ENCODE measurements at regions of chr11 and their contacts with region 1.

Region 1: GRCh38 chr11:66677599-66678375 is at the start of gene RBM4B:
- DNase-seq: peak; percentile 92 to 98
- H3K4me3 ChIP-seq: peak within 1 kb of the TSS; percentile 69 to 86 (median 78)
- H3K27ac ChIP-seq: peak within 1 kb of the TSS; percentile 88
- H3K4me1 ChIP-seq: peaks cover 3 to 15% (median 8%) of the 10 kb centered on the region in 4 experiments; a peak in 5 of 7 replicates
- H3K27me3 ChIP-seq: no peaks in the 10 kb centered on the region
- CTCF ChIP-seq: no peak
- EP300 ChIP-seq: no peak
- POLR2A ChIP-seq: peak; percentile 77 to 88
- RAD21 ChIP-seq: no peak
- total RNA-seq, gene RBM4B: 27.5 and 30.6 TPM in 2 replicates

Region 2: DNA sequence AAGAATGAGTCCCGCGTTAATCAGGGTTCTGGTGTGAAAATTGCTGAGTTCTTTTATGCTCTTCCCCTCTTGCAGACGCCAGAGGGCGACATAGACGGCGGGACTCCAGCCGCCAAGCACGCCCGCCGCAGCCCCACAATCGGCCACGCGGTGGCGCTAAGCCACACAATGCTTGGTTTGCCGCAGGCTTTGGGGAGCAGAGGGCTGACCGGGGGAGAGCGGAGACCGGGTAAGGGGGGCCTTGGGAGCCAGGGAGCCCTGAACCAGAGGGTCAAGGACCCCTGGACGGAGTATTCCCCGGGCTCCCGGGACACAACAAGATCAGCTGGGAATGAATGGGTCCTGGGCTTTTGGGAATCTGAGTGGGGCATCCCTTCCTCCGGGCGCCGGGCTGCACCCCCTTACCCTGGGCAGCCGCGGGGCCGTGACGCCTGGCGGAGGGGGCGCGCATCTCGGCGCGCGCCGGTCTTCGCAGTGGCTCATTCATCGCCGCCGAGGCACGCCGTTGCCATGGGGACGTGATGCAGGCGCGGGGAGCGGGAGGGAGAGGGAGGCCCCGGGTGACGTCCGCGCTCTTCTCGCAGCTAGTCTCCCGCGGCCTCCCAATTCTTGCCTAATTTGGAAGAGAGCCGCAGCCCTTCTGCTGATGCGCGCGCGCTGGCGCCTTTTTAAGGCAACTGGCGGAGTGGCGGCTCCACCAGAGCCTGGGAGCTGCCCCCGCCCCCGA is 269.1 kb before region 1 on chr11:
- CTCF ChIA-PET with region 1: interaction called, 8 read pairs
- POLR2A ChIA-PET with region 1: interaction called, 10 read pairs
- DNase-seq: peak; percentile 85 to 100
- H3K4me3 ChIP-seq: peak overlapping the region; percentile 8 to 68 (median 30)
- H3K27ac ChIP-seq: no peak overlapping the region
- H3K4me1 ChIP-seq: peaks cover 0 to 14% (median 11%) of the 10 kb centered on the region in 4 experiments; a peak in 6 of 7 replicates
- H3K27me3 ChIP-seq: peaks cover 0 to 10% (median 2%) of the 10 kb centered on the region in 4 experiments; a peak in 3 of 7 replicates
- CTCF ChIP-seq: peak; percentile 99 to 100 (median 100)
- EP300 ChIP-seq: no peak; a peak in 1 of 3 replicates
- POLR2A ChIP-seq: peak in 1 of 2 experiments; percentile 54; a peak in 2 of 3 replicates
- RAD21 ChIP-seq: peak; percentile 98 to 99

Region 3: GRCh38 chr11:66510271-66510989 is 167.4 kb before region 1 on chr11 and contains the start of gene BBS1:
- CTCF ChIA-PET with region 1: interaction called, 17 read pairs
- POLR2A ChIA-PET with region 1: interaction called, 10 read pairs
- DNase-seq: peak; percentile 44 to 97
- H3K4me3 ChIP-seq: peak within 1 kb of the TSS; percentile 61 to 98 (median 97)
- H3K27ac ChIP-seq: peak within 1 kb of the TSS; percentile 63
- H3K4me1 ChIP-seq: peaks cover 0 to 1% (median 0%) of the 10 kb centered on the region in 4 experiments; a peak in 1 of 7 replicates
- H3K27me3 ChIP-seq: no peaks in the 10 kb centered on the region
- CTCF ChIP-seq: no peak
- EP300 ChIP-seq: no peak
- POLR2A ChIP-seq: peak; percentile 60 to 81
- RAD21 ChIP-seq: no peak; a peak in 1 of 4 replicates
- total RNA-seq, gene BBS1: 19.1 and 22.1 TPM in 2 replicates

Region 4: DNA sequence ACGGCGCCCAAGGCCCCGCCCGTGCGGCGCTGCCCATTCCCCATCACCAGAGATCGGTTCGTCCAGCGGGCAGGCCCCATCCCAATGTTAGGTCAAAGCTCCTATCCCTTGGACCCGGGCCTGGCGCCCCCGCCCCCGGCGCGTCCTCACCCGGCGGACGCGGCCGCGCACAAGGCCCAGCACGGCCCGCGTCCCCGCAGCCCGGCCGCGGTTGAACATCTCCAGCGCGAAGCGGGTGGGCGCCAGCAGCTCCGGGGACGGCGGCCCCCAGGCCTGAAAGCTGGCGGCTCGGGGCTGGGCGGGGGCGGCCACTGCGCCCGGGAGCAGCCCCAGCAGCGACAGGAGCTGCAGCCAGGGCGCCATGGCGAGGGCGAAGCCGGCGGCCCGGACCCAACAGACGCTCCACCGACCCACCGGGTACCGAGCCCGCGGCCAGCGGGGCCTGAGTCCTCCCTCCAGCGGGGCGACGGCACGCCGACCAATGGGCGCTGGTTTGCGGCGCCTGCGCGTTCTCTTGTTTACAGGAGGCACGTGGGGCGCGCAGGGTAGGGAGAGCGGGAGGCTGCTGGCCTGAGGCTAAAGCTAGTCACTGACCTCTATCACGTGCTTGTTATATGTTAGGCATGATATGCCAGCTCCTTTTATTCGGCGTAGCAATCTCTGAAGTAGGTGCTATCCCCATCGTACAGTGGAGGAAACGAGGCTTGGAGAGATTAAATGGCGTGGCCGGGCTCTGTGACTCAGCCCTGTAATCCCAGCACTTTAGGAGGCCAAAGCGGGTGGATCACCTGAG is 109.5 kb before region 1 on chr11 and contains the start of gene CTSF:
- CTCF ChIA-PET with region 1: interaction called, 12 read pairs
- POLR2A ChIA-PET with region 1: interaction called, 12 read pairs
- DNase-seq: no peak
- H3K4me3 ChIP-seq: no peak within 1 kb of the TSS; a peak in 1 of 8 replicates
- H3K27ac ChIP-seq: no peak within 1 kb of the TSS; the same call in 1 of the 2 replicates
- H3K4me1 ChIP-seq: peaks cover 11 to 20% (median 14%) of the 10 kb centered on the region in 4 experiments; a peak in 6 of 7 replicates
- H3K27me3 ChIP-seq: no peaks in the 10 kb centered on the region
- CTCF ChIP-seq: no peak
- EP300 ChIP-seq: no peak
- POLR2A ChIP-seq: no peak
- RAD21 ChIP-seq: no peak
- total RNA-seq, gene CTSF: 0.36 and 0.58 TPM in 2 replicates

Region 5: GRCh38 chr11:66638177-66639065 is 39.4 kb before region 1 on chr11 and contains the start of gene RBM4:
- CTCF ChIA-PET with region 1: interaction called, 9 read pairs
- POLR2A ChIA-PET with region 1: interaction called, 2,165 read pairs
- DNase-seq: peak; percentile 94 to 99
- H3K4me3 ChIP-seq: peak within 1 kb of the TSS; percentile 84 to 98 (median 94)
- H3K27ac ChIP-seq: peak within 1 kb of the TSS; percentile 99
- H3K4me1 ChIP-seq: peaks cover 0 to 20% (median 14%) of the 10 kb centered on the region in 4 experiments; a peak in 5 of 7 replicates
- H3K27me3 ChIP-seq: no peaks in the 10 kb centered on the region
- CTCF ChIP-seq: no peak
- EP300 ChIP-seq: 0 out of 3 replicates have a peak, but pooled peaks of 1 of the 2 experiments have one; percentile 21
- POLR2A ChIP-seq: peak; percentile 95 to 99
- RAD21 ChIP-seq: 0 out of 4 replicates have a peak, but pooled peaks of 1 of the 2 experiments have one; percentile 4
- total RNA-seq, gene RBM4: 192 and 201 TPM in 2 replicates

Region 6: GRCh38 chr11:66659763-66660162 is 18.0 kb before region 1 on chr11:
- CTCF ChIA-PET with region 1: interaction called, 3 read pairs
- POLR2A ChIA-PET with region 1: interaction called, 36 read pairs
- DNase-seq: no peak
- H3K4me3 ChIP-seq: no peak overlapping the region
- H3K27ac ChIP-seq: no peak overlapping the region
- H3K4me1 ChIP-seq: no peaks in the 10 kb centered on the region
- H3K27me3 ChIP-seq: no peaks in the 10 kb centered on the region
- CTCF ChIP-seq: no peak
- EP300 ChIP-seq: no peak
- POLR2A ChIP-seq: no peak
- RAD21 ChIP-seq: no peak